ENCODE measurements at regions of chr1 and their contacts with region 1.

Region 1: DNA sequence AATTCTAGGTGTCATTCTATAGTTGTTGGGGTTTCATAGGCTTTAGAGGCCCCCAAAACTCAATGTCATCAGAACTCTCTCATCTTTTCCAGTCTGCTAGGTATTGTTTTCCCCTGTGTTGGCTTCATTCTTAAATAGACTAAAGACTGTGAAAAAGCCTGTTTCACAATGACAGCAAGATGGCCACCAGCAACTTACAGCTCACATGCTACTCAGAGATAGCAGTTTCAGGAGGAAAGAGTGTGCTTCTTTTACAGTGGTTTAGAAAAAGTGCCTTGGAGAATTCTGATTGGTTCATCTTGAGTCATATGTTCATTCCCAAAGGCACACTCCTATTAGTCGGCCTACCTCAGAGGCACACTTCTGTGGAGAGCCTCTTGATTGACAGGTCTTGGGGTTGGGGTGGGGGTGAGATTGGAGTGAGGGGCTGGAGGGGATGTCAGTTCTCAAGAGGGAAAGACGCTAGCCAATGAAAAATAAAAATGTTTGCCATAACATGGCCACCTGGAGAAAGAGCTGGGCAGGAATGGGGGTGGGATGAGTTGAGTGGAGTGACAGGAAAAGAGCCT is 8.5 kb downstream of the IL23R start:
- DNase-seq: no peak
- H3K4me3 Mint-ChIP-seq: peak overlapping the region; percentile 76
- H3K27ac Mint-ChIP-seq: peak overlapping the region; percentile 98
- H3K4me1 Mint-ChIP-seq: peaks cover 68% of the 10 kb centered on the region
- H3K27me3 Mint-ChIP-seq: no peaks in the 10 kb centered on the region

Region 2: DNA sequence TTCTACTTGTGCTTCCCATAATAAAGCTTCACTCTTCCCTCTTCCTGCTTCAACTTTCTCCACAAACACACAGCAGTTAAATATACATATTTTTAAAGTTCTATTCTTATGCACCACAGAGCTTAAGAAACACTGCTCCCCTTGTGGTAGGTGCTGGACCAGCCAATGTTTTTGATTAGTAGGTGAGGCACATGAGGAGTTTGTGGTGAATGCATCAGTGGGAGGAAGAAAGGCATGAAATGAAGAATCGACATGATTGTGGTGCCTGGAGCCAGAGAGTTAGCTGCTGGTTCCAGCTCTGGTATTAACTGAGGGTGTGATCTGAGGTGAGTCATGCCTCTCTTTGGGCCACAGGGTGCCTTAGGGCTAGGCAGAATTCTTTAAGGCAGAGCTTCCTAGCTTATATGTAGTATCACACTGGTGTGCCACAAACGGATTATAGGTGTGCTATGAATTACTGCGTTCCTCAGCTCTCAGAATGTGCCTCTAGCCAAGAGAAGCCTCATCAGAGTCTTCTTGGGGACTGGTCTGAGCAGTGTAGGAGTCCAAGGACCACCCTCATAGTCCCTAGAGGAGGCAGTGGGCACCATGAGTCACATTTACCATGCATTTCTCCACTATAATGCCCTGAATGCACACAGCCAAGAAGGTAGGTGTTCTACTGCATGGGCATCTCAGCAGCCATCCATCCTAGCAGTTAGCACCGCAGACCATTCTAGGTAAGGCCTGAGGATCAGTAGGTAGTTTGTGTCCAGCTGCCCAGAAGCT is 738.2 kb before region 1 on chr1:
- intact Hi-C with region 1: loop called (anchors 5 kb)
- DNase-seq: peak; percentile 34
- H3K4me3 Mint-ChIP-seq: no peak overlapping the region
- H3K27ac Mint-ChIP-seq: peak overlapping the region; percentile 2
- H3K4me1 Mint-ChIP-seq: peaks cover 45% of the 10 kb centered on the region
- H3K27me3 Mint-ChIP-seq: no peaks in the 10 kb centered on the region

Region 3: GRCh38 chr1:66917476-66917875 is 257.3 kb before region 1 on chr1:
- intact Hi-C with region 1: no loop called
- DNase-seq: no peak
- H3K4me3 Mint-ChIP-seq: no peak overlapping the region
- H3K27ac Mint-ChIP-seq: no peak overlapping the region
- H3K4me1 Mint-ChIP-seq: peaks cover 5% of the 10 kb centered on the region
- H3K27me3 Mint-ChIP-seq: no peaks in the 10 kb centered on the region

Region 4: GRCh38 chr1:67162957-67163356 is 11.8 kb before region 1 on chr1:
- intact Hi-C with region 1: loop called (anchors 1 kb)
- DNase-seq: peak; percentile 62
- H3K4me3 Mint-ChIP-seq: peak overlapping the region; percentile 55
- H3K27ac Mint-ChIP-seq: peak overlapping the region; percentile 93
- H3K4me1 Mint-ChIP-seq: peaks cover 65% of the 10 kb centered on the region
- H3K27me3 Mint-ChIP-seq: no peaks in the 10 kb centered on the region

Region 5: GRCh38 chr1:67285780-67286488 is 111.1 kb after region 1 on chr1:
- intact Hi-C with region 1: loop called (anchors 5 kb)
- DNase-seq: no peak
- H3K4me3 Mint-ChIP-seq: peak overlapping the region; percentile 5
- H3K27ac Mint-ChIP-seq: peak overlapping the region; percentile 79
- H3K4me1 Mint-ChIP-seq: peaks cover 61% of the 10 kb centered on the region
- H3K27me3 Mint-ChIP-seq: no peaks in the 10 kb centered on the region

Region 6: GRCh38 chr1:67332653-67333529 is 158.1 kb after region 1 on chr1:
- intact Hi-C with region 1: loop called (anchors 1 kb)
- DNase-seq: peak; percentile 64
- H3K4me3 Mint-ChIP-seq: peak overlapping the region; percentile 27
- H3K27ac Mint-ChIP-seq: peak overlapping the region; percentile 99
- H3K4me1 Mint-ChIP-seq: peaks cover 77% of the 10 kb centered on the region
- H3K27me3 Mint-ChIP-seq: no peaks in the 10 kb centered on the region

Region 7: GRCh38 chr1:67347688-67348472 is 173.1 kb after region 1 on chr1:
- intact Hi-C with region 1: no loop called
- DNase-seq: no peak
- H3K4me3 Mint-ChIP-seq: no peak overlapping the region
- H3K27ac Mint-ChIP-seq: peak overlapping the region; percentile 51
- H3K4me1 Mint-ChIP-seq: peaks cover 62% of the 10 kb centered on the region
- H3K27me3 Mint-ChIP-seq: no peaks in the 10 kb centered on the region

Region 8: GRCh38 chr1:67446893-67447292 is 272.1 kb after region 1 on chr1:
- intact Hi-C with region 1: no loop called
- DNase-seq: no peak
- H3K4me3 Mint-ChIP-seq: no peak overlapping the region
- H3K27ac Mint-ChIP-seq: no peak overlapping the region
- H3K4me1 Mint-ChIP-seq: peaks cover 12% of the 10 kb centered on the region
- H3K27me3 Mint-ChIP-seq: no peaks in the 10 kb centered on the region

Measured in activated T-helper 1 cell treated with anti-CD3 and anti-CD28 coated beads, Interleukin-12 subunit alpha, Interleukin-12 subunit beta, Interleukin-2, Interleukin-4 antibody, amounts not matched to agents 30 ng/mL and 10 ng/mL and 1 ng/mL, durations not matched to agents 14 hours and 24 hours and 36 hours (primary cell).